Activated T-helper 2 cell treated with anti-CD3 and anti-CD28 coated beads, Interferon-gamma antibody, Interleukin-2, Interleukin-4, amounts not matched to agents 10 μg/mL and 5 μg/mL and 100 μg/mL, durations not matched to agents 14 hours and 24 hours and 36 hours (primary cell): ENCODE measurements at regions of chr12 and their contacts with region 1.

Region 1: GRCh38 chr12:2034633-2035430 is 18.0 kb upstream of the CACNA1C start:
- DNase-seq: peak; percentile 79
- H3K4me3 Mint-ChIP-seq: peak overlapping the region; percentile 38
- H3K27ac Mint-ChIP-seq: no peak overlapping the region
- H3K4me1 Mint-ChIP-seq: peaks cover 11% of the 10 kb centered on the region
- H3K27me3 Mint-ChIP-seq: peaks cover 53% of the 10 kb centered on the region

Region 2: DNA sequence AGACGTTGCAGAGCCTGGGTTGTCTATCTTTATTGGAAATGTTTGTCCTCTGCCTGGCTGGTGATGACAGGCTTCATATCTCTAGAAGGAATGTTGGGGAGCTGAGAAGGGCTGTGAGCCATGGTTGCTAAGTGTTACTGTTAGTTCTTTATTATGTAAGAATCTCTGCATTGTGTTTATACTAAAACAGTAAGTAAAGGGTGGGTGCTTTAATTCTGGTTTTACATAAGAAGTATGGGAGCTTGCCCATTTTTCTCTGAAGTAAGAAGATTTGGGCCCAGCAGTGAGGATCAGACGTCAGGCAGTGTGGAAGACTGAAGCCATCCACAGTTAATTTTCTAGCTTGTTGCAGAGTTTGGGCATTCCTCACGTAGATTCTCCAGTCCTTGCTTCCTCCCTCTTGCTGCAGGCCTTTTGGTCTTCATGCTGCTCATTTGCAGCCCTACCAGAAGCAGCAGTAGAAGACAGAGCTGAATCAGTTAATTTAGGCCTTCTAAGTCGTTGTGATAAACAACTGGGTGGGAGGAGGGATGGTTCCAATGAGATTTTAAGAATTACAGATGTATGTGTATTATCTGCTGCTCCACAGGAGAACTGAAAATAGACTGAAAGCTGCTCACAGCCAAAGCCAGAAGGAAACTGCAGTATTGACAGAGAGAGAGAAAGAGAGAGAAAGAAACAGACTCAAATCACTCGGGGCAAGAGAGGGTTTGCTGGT is 384.4 kb before region 1 on chr12:
- intact Hi-C with region 1: loop called (anchors 10 kb)
- DNase-seq: no peak
- H3K4me3 Mint-ChIP-seq: no peak overlapping the region
- H3K27ac Mint-ChIP-seq: no peak overlapping the region
- H3K4me1 Mint-ChIP-seq: peaks cover 8% of the 10 kb centered on the region
- H3K27me3 Mint-ChIP-seq: peaks cover 35% of the 10 kb centered on the region

Region 3: DNA sequence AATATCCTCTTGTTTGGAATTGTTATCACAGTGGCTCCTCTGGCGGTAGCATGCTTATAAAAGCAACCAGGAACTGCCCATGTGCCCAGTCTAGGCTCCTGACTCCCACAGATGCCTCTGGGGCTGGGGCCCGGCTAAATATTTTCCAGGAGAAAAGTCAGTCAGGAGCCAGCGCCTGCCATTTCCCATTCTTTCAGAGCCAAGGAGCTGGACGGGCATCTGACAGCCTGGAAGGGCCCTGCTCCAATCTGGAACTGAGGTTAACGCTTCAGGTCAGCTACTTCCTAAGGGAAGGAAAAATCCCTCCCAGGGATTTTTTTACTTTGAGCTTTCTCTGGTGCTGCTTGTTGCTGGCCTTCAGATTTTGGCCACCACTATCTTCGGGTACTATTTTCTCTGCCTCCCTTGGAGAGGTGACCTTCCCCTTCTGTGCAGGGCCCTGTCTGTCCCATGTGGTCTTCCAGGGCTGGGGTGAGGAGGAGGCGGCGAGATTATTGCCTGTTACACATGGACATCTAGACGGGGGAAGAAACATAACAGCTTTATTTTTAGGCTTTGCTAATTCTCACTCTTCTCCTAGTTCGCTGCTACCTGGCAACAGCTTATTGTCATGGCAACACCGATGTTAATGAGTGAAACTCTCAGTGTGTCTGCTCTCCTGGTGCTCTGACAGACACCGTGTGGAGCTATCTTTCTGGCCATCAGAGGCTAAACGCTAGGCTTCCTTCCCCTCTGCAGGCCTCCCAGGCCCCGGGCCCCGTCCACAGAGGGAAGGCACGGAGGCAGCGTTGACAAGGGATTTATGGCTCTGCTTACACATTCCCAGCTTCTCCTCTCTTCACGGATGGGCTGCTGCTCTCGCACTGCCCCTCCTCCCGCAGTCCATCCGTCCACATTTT is 178.4 kb after region 1 on chr12:
- intact Hi-C with region 1: no loop called
- DNase-seq: no peak
- H3K4me3 Mint-ChIP-seq: no peak overlapping the region
- H3K27ac Mint-ChIP-seq: no peak overlapping the region
- H3K4me1 Mint-ChIP-seq: no peaks in the 10 kb centered on the region
- H3K27me3 Mint-ChIP-seq: peaks cover 15% of the 10 kb centered on the region